Activated CD4-positive, alpha-beta memory T cell treated with anti-CD3 and anti-CD28 coated beads, Interleukin-2, amount 10 ng/mL, durations not matched to agents 7 days and 5 days (primary cell): ENCODE measurements at regions of chr7 and their contacts with region 1.

Region 1: GRCh38 chr7:70681469-70682350 is 450.2 kb upstream of the GALNT17 start:
- DNase-seq: peak; percentile 34
- H3K4me3 Mint-ChIP-seq: peak overlapping the region; percentile 47
- H3K27ac Mint-ChIP-seq: peak overlapping the region; percentile 65
- H3K4me1 Mint-ChIP-seq: peaks cover 42% of the 10 kb centered on the region
- H3K27me3 Mint-ChIP-seq: no peaks in the 10 kb centered on the region

Region 2: DNA sequence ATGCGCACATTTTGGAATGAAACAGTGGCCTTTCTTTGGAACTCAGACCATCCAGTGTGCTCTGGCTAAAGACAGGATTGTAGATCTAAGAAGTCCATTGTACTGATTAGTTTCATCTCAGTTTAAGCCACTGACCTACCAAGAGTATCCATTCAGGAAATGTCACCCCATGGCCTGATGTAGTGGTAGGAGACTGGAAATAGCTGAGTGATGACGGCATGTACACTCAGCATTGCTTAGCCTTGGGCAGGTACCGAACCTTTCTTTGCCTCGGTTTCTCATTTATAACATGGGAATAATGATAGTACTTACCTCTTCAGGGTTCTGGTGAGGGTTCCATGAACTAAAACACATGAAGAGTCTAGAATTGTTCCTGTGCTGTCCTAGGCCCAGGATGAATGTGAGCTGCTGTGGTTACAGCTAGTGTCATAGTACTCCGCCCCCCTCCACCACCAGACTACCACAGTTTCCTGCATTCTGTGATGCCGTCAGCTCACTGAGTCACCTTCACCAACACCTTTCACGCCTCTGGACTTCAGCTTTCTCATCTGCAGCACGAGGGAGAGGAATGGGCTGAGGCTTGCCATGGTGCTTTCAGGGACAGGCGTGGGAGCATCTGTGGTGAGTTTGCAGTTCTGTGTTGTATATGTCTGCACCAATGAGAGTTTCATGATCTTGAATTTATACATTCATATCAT is 33.8 kb before region 1 on chr7:
- CTCF ChIA-PET with region 1: no interaction called
- POLR2A ChIA-PET with region 1: interaction called, 11 read pairs
- DNase-seq: peak; percentile 85
- H3K4me3 Mint-ChIP-seq: peak overlapping the region; percentile 32
- H3K27ac Mint-ChIP-seq: peak overlapping the region; percentile 64
- H3K4me1 Mint-ChIP-seq: peaks cover 21% of the 10 kb centered on the region
- H3K27me3 Mint-ChIP-seq: peaks cover 7% of the 10 kb centered on the region